OCI-LY7 (cell line): ENCODE measurements at regions of chr22 and their contacts with region 1.

Region 1: GRCh38 chr22:23969071-23969470 is 2.4 kb downstream of the DDTL start:
- DNase-seq: no peak
- H3K4me3 ChIP-seq: no peak overlapping the region
- H3K27ac ChIP-seq: no peak overlapping the region
- H3K4me1 ChIP-seq: no peaks in the 10 kb centered on the region
- CTCF ChIP-seq: no peak

Region 2: GRCh38 chr22:23938328-23939016 is 30.6 kb before region 1 on chr22:
- CTCF ChIA-PET with region 1: no interaction called
- POLR2A ChIA-PET with region 1: no interaction called
- intact Hi-C with region 1: loop called (anchors 5 kb)
- DNase-seq: no peak
- H3K4me3 ChIP-seq: no peak overlapping the region
- H3K27ac ChIP-seq: no peak overlapping the region
- H3K4me1 ChIP-seq: no peaks in the 10 kb centered on the region
- CTCF ChIP-seq: no peak